Psoas muscle (tissue), 8 donors: ENCODE measurements at regions of chr3 and their contacts with region 1.

Region 1: DNA sequence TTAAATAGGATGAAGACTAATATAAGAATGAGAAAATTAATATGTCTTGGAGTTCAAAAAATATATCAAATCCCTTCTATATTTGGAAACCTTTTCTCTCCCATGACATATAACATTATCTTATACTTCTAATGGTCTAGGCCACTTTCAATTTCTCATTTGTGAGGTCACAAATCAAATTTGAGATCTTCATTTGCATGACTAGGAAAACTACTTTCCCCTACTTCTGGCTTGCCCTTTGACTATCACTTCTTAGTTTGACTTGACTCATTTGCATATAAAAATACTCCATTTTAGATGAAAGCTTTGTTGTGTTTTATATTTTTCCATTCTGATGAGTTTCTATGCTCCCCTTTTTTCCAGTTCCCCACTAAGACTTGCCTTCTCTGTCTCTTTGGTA is 598.6 kb upstream of the TBL1XR1 start:
- DNase-seq: no peak
- ATAC-seq: no peak
- H3K4me3 ChIP-seq: no peak overlapping the region
- H3K27ac ChIP-seq: no peak overlapping the region
- H3K4me1 ChIP-seq: no peaks in the 10 kb centered on the region
- H3K27me3 ChIP-seq: no peaks in the 10 kb centered on the region
- CTCF ChIP-seq: no peak

Region 2: GRCh38 chr3:177783338-177783737 is 12.5 kb before region 1 on chr3:
- intact Hi-C with region 1: loop called in 1 of 2 experiments (anchors 1 kb)
- DNase-seq: no peak
- ATAC-seq: peak in 3 of 4 donors; percentile 77 to 86 (median 82)
- H3K4me3 ChIP-seq: no peak overlapping the region
- H3K27ac ChIP-seq: no peak overlapping the region
- H3K4me1 ChIP-seq: peaks cover 12% of the 10 kb centered on the region
- H3K27me3 ChIP-seq: no peaks in the 10 kb centered on the region
- CTCF ChIP-seq: no peak